ENCODE measurements at regions of chr18 and their contacts with region 1.

Region 1: GRCh38 chr18:63523660-63524059 is 18.5 kb upstream of the SERPINB12 start:
- DNase-seq: peak in 2 of 5 donors; percentile 25 to 40
- H3K4me3 ChIP-seq: no peak overlapping the region
- H3K27ac ChIP-seq: no peak overlapping the region
- H3K4me1 ChIP-seq: no peaks in the 10 kb centered on the region
- H3K27me3 ChIP-seq: no peaks in the 10 kb centered on the region
- CTCF ChIP-seq: no peak

Region 2: DNA sequence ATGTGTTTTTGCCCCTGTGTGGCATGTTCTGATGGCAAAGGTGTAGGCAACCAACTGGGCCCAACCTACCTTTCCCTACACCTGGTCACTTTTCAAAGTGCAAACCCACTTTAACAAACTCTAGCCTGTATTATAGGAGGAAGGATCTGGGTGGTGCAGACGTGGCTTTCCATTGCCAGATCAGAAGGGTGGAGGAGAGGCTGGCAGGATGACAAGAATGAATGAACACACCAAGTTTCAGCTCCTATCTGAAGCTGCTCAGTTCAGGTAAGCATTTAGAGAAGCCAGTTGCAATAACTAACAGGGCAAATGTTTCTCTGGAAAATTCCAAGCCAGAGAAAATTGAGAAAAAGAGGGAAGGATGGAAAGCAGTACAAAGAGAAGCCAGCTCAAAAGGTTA is 250.9 kb after region 1 on chr18:
- intact Hi-C with region 1: no loop called
- DNase-seq: no peak
- H3K4me3 ChIP-seq: no peak overlapping the region
- H3K27ac ChIP-seq: no peak overlapping the region
- H3K4me1 ChIP-seq: no peaks in the 10 kb centered on the region
- H3K27me3 ChIP-seq: no peaks in the 10 kb centered on the region
- CTCF ChIP-seq: no peak

Region 3: DNA sequence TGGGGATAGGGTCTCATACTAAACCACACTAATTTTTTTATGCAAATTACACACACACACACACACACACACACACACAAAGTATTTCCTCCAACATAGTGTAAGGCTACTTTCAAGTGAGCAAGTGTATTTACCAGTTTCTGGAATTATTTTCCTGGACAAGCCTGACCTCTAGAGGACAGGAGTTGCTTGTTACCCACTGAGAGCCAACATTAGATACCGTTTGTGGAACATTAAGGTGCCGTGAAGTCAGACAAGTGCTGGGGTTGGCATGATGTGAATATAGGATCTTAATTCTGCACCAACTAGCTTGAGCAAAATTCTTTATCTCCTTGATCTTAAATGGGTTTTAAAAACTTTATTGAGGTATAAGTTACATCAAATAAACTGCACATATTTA is 324.5 kb after region 1 on chr18:
- intact Hi-C with region 1: loop called (anchors 10 kb)
- DNase-seq: peak in 3 of 5 donors; percentile 12 to 82 (median 73)
- H3K4me3 ChIP-seq: no peak overlapping the region
- H3K27ac ChIP-seq: no peak overlapping the region
- H3K4me1 ChIP-seq: no peaks in the 10 kb centered on the region
- H3K27me3 ChIP-seq: no peaks in the 10 kb centered on the region
- CTCF ChIP-seq: peak; percentile 60